Common myeloid progenitor, CD34-positive (primary cell): ENCODE measurements at regions of chr22 and their contacts with region 1.

Region 1: DNA sequence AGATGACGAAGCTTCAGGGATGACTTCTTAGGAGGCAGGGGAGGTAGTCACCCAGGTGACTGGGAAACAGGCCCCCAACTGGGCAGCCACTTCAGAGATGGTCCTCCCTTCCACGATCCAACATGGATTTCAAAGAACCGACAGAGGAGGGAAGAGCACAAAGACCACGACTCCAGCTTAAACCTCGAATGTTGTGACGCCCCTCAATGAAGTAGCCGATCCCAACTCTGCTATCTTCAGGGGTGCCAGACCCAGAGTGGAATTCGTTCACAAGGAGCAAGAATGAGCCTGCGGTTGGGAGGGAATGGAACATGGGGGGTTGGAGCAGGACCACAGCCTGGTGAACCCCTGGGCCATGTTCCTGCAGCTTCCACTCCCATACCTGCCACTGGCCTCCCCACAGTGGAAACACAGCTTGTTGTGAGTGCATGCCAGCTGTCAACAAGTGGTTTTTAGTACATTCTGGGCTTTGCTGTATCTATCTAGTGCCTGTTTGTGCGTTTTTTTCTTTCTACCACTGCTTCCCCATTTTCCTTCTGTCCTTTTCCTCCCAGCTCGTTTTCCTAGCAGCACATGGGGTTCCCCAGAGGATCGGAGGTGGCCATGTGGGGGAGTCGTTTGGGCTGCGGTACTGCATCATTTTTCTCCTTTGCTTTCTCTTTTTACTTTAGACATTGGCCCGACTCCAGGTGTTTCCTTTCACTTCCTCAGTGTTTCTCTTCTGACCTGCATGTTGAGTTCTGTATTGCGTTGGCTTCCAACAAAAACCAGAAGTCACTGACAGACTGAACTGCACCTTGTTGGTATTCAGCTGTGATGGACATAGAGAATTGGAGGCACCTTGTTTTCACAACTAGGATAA is 65.8 kb downstream of the MORC2 start:
- DNase-seq: peak; percentile 39 to 74 (median 74)
- H3K4me3 ChIP-seq: peak overlapping the region in 4 of 7 experiments; percentile 11 to 44 (median 32)
- H3K27ac ChIP-seq: no peak overlapping the region
- H3K4me1 ChIP-seq: peaks cover 0 to 14% (median 7%) of the 10 kb centered on the region in 4 experiments
- H3K27me3 ChIP-seq: no peaks in the 10 kb centered on the region

Region 2: GRCh38 chr22:30890686-30891442 is 11.9 kb before region 1 on chr22:
- CTCF ChIA-PET with region 1: interaction called, 13 read pairs
- POLR2A ChIA-PET with region 1: no interaction called
- DNase-seq: peak; percentile 9 to 42 (median 22)
- H3K4me3 ChIP-seq: no peak overlapping the region
- H3K27ac ChIP-seq: no peak overlapping the region
- H3K4me1 ChIP-seq: no peaks in the 10 kb centered on the region
- H3K27me3 ChIP-seq: no peaks in the 10 kb centered on the region